Activated T-helper 1 cell treated with anti-CD3 and anti-CD28 coated beads, Interleukin-12 subunit alpha, Interleukin-12 subunit beta, Interleukin-2, Interleukin-4 antibody, amounts not matched to agents 30 ng/mL and 10 ng/mL and 1 ng/mL, durations not matched to agents 14 hours and 24 hours and 36 hours (primary cell): ENCODE measurements at regions of chr7 and their contacts with region 1.

Region 1: DNA sequence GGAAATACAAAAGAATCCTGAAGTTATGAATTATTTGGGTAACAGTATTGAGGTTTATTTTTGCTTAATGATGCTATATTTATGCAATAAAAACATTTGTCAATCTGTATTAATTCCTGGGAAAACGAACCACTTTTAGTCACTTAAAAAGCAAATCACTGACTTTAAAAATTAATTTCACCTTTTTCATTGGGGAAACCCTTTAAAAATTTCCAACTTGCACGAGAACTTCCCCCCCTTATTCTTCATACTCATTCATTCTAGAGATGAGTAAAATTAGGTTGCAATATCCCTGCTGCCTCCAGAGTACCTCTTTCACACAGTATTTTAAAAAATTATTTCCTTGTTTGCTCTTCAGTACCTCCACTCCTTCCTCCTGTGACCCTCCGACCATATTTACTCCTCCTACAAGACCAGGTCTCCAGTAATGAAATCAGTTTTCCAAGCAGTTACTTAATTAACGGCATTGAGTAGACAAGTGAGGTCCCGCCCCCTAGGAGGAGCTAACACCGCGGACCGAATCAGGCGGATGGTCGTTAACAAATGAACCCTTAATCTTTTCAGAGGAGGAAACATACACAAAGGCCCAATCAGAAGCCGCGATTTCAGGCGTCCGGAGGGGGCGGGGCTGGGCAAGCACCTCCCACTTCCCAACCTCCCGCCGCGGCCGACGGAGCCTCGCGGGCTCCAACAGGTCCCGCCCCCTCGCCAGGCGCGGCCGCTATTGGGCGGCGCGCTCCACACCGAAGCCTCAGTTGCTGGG is 465 bp upstream of the TRIM24 start:
- DNase-seq: peak; percentile 97
- H3K4me3 Mint-ChIP-seq: peak overlapping the region; percentile 79
- H3K27ac Mint-ChIP-seq: peak overlapping the region; percentile 18
- H3K4me1 Mint-ChIP-seq: peaks cover 26% of the 10 kb centered on the region
- H3K27me3 Mint-ChIP-seq: no peaks in the 10 kb centered on the region

Region 2: GRCh38 chr7:138161600-138162081 is 298.0 kb before region 1 on chr7:
- intact Hi-C with region 1: loop called (anchors 2 kb)
- DNase-seq: peak; percentile 61
- H3K4me3 Mint-ChIP-seq: no peak overlapping the region
- H3K27ac Mint-ChIP-seq: no peak overlapping the region
- H3K4me1 Mint-ChIP-seq: no peaks in the 10 kb centered on the region
- H3K27me3 Mint-ChIP-seq: peaks cover 7% of the 10 kb centered on the region

Region 3: GRCh38 chr7:138625849-138626230 is 166.2 kb after region 1 on chr7:
- intact Hi-C with region 1: loop called (anchors 2 kb)
- DNase-seq: no peak
- H3K4me3 Mint-ChIP-seq: no peak overlapping the region
- H3K27ac Mint-ChIP-seq: no peak overlapping the region
- H3K4me1 Mint-ChIP-seq: peaks cover 32% of the 10 kb centered on the region
- H3K27me3 Mint-ChIP-seq: peaks cover 7% of the 10 kb centered on the region

Region 4: DNA sequence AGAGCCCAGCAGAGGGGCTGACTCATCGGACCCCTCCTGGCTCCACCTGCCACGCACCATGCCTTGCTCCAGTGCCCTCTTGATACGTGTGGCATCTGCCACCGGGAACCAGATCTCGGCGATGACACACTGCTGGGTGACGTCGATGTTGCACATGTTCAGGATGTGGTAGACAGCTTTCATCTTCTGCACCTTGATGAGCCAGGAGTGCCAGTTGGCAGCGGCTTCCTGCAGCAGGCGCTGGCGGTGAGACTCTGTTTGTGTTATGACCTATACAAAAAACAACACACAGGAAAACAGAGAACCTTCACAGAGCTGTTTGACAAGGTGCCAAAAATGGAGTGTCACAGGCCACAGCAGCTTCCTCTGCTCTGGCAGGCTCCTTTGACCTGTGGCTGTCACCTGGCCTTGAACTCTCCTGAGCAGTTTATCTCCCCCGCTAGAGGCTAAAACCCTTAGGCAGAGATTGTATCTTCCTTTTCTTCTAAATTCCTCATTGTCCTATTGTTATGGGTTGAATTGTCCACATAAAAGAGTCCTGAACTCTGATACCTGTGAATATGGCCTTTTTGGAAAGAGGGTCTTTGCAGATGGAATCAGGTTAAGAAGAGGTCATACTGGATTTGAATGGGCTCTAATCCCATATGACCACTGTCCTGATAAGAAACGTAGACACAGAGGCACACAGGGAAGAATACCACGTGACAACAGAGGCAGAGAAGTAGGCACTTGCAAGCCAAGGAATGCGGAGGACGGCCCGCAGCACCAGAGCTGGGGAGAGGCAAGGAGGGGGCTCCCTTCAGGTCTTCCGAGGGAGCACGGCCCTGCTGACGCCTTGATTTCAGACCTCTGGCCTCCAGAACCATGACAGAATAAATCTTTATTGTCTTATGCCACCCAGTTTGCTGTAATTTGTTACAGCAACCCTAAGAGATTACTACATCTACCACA is 293.2 kb after region 1 on chr7:
- intact Hi-C with region 1: loop called (anchors 1 kb)
- DNase-seq: peak; percentile 86
- H3K4me3 Mint-ChIP-seq: peak overlapping the region; percentile 27
- H3K27ac Mint-ChIP-seq: peak overlapping the region; percentile 80
- H3K4me1 Mint-ChIP-seq: peaks cover 72% of the 10 kb centered on the region
- H3K27me3 Mint-ChIP-seq: peaks cover 1% of the 10 kb centered on the region

Region 5: DNA sequence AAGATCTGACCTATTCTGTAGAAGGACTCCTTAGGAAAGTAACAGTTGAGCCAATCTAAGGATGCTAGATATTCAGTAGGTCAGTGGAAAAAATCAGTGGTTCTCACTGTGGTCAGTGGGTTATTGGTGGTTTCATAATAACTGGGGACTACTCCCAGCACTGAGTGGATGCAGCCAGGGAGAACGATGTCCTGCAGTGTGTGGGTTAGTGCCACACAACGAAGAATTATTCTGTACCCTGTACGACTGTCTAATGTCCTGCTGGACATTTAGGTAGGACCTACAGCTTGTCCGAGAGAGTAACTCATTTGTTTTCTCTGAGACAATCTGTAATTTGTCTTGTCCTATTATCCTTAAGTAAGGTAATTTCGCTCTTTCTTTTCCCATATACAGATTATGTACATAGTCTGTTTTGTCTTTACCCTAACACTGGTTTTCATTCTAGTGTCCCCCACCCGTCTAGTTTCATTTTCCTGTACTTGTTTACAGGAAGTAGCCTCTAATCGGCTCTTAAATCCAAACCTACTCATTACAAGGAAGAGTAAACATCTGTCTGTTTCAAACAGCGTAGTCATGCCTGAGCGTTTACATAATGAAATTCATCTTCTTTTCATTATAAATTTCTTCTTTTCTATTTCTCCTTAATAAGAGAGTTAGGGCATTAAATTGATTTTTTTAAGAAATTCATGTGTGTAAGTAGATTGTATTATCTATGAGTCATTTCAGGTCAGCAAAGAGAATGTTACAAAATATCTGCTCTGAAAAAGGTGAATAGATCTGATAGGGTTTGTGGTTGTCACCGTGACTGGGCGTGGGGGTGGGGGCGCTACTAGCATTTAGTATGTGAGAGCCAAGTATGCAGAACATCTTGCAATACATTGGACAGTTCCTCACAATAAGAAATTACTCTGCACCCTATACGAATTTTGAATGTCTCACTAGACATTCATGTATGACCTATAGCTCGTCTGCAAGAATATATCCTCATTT is 584.5 kb after region 1 on chr7:
- intact Hi-C with region 1: loop called (anchors 10 kb)
- DNase-seq: peak; percentile 64
- H3K4me3 Mint-ChIP-seq: peak overlapping the region; percentile 66
- H3K27ac Mint-ChIP-seq: peak overlapping the region; percentile 95
- H3K4me1 Mint-ChIP-seq: peaks cover 72% of the 10 kb centered on the region
- H3K27me3 Mint-ChIP-seq: no peaks in the 10 kb centered on the region